ENCODE measurements at regions of chr11 and their contacts with region 1.

Region 1: GRCh38 chr11:116772443-116773202 is at the start of gene BUD13:
- DNase-seq: peak; percentile 96 to 99
- H3K4me3 ChIP-seq: peak within 1 kb of the TSS; percentile 93
- H3K4me3 Mint-ChIP-seq: peak within 1 kb of the TSS; percentile 99
- H3K27ac Mint-ChIP-seq: peak within 1 kb of the TSS; percentile 98
- H3K4me1 ChIP-seq: peaks cover 26% of the 10 kb centered on the region
- H3K4me1 Mint-ChIP-seq: peaks cover 37% of the 10 kb centered on the region
- H3K27me3 ChIP-seq: no peaks in the 10 kb centered on the region
- H3K27me3 Mint-ChIP-seq: no peaks in the 10 kb centered on the region
- CTCF ChIP-seq: peak in 1 of 2 experiments; percentile 54
- total RNA-seq, gene BUD13: 37.8 and 42.6 TPM in 2 replicates

Region 2: GRCh38 chr11:116348226-116348625 is 424.4 kb before region 1 on chr11:
- CTCF ChIA-PET with region 1: no interaction called
- POLR2A ChIA-PET with region 1: no interaction called
- intact Hi-C with region 1: no loop called
- DNase-seq: no peak
- H3K4me3 ChIP-seq: no peak overlapping the region
- H3K4me3 Mint-ChIP-seq: no peak overlapping the region
- H3K27ac Mint-ChIP-seq: no peak overlapping the region
- H3K4me1 ChIP-seq: no peaks in the 10 kb centered on the region
- H3K4me1 Mint-ChIP-seq: no peaks in the 10 kb centered on the region
- H3K27me3 ChIP-seq: no peaks in the 10 kb centered on the region
- H3K27me3 Mint-ChIP-seq: peaks cover 2% of the 10 kb centered on the region
- CTCF ChIP-seq: no peak

Region 3: DNA sequence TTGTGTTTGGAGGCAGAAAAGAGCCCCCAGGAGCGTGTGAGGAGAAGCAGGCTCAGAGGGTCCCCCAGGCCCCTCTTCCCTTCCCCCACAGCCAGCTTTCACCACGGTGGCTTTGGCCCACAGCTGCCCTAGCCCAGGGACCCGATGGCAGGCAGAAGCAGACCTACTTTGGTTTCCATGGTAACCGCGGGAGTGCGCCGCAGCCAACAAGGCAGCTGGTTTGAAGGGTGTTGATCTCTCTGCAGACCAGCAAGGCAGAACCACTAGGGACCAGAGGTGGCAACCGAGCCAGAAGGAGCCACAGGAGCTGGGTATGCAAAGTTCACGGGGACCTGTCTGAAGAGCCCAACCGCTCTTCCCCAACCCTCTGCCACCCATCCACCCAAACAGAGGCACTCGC is 69.2 kb before region 1 on chr11:
- CTCF ChIA-PET with region 1: no interaction called
- POLR2A ChIA-PET with region 1: no interaction called
- intact Hi-C with region 1: no loop called
- DNase-seq: peak; percentile 42 to 49
- H3K4me3 ChIP-seq: no peak overlapping the region
- H3K4me3 Mint-ChIP-seq: no peak overlapping the region
- H3K27ac Mint-ChIP-seq: no peak overlapping the region
- H3K4me1 ChIP-seq: no peaks in the 10 kb centered on the region
- H3K4me1 Mint-ChIP-seq: peaks cover 6% of the 10 kb centered on the region
- H3K27me3 ChIP-seq: peaks cover 2% of the 10 kb centered on the region; the same call in 1 of the 2 replicates
- H3K27me3 Mint-ChIP-seq: no peaks in the 10 kb centered on the region
- CTCF ChIP-seq: no peak

Region 4: GRCh38 chr11:116808386-116809194 is 36.0 kb after region 1 on chr11:
- CTCF ChIA-PET with region 1: no interaction called
- POLR2A ChIA-PET with region 1: interaction called, 5 read pairs
- intact Hi-C with region 1: loop called (anchors 1 kb)
- DNase-seq: peak; percentile 94 to 96
- H3K4me3 ChIP-seq: 0 out of 2 replicates have a peak overlapping the region, but pooled peaks have one; percentile 4
- H3K4me3 Mint-ChIP-seq: peak overlapping the region; percentile 67
- H3K27ac Mint-ChIP-seq: peak overlapping the region; percentile 98
- H3K4me1 ChIP-seq: peaks cover 70% of the 10 kb centered on the region
- H3K4me1 Mint-ChIP-seq: peaks cover 69% of the 10 kb centered on the region
- H3K27me3 ChIP-seq: no peaks in the 10 kb centered on the region
- H3K27me3 Mint-ChIP-seq: no peaks in the 10 kb centered on the region
- CTCF ChIP-seq: no peak

Region 5: DNA sequence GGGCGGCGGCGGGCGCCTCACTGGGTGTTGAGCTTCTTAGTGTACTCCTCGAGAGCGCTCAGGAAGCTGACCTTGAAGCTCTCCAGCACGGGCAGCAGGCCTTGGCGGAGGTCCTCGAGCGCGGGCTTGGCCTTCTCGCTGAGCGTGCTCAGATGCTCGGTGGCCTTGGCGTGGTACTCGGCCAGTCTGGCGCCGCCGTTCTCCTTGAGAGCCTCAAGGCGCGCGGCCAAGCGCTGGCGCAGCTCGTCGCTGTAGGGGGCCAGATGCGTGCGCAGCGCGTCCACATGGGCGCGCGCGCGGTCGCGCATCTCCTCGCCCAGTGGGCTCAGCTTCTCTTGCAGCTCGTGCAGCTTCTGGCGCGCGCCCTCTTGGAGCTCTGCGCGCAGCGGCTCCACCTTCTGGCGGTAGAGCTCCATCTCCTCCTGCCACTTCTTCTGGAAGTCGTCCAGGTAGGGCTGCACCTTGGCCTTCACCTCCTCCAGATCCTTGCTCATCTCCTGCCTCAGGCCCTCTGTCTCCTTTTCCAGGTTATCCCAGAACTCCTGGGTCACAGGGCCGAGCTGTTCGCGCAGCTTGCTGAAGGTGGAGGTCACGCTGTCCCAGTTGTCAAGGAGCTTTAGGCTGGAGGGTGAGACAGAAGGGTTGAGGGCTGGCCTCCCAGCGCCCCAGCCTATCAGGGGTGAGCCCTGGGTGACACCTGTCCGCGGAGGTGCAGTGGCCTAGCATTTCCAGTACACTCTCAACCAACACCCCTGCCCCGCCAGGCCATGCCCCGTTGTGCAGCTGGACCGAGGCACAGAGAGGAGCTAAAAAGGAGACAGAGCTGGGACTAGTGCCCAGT is 63.4 kb after region 1 on chr11:
- CTCF ChIA-PET with region 1: interaction called, 15 read pairs
- POLR2A ChIA-PET with region 1: interaction called, 10 read pairs
- intact Hi-C with region 1: loop called (anchors 1 kb)
- DNase-seq: peak; percentile 69 to 77
- H3K4me3 ChIP-seq: peak overlapping the region; percentile 40
- H3K4me3 Mint-ChIP-seq: peak overlapping the region; percentile 68
- H3K27ac Mint-ChIP-seq: peak overlapping the region; percentile 92
- H3K4me1 ChIP-seq: peaks cover 86% of the 10 kb centered on the region
- H3K4me1 Mint-ChIP-seq: peaks cover 65% of the 10 kb centered on the region
- H3K27me3 ChIP-seq: no peaks in the 10 kb centered on the region
- H3K27me3 Mint-ChIP-seq: no peaks in the 10 kb centered on the region
- CTCF ChIP-seq: peak; percentile 51

Region 6: DNA sequence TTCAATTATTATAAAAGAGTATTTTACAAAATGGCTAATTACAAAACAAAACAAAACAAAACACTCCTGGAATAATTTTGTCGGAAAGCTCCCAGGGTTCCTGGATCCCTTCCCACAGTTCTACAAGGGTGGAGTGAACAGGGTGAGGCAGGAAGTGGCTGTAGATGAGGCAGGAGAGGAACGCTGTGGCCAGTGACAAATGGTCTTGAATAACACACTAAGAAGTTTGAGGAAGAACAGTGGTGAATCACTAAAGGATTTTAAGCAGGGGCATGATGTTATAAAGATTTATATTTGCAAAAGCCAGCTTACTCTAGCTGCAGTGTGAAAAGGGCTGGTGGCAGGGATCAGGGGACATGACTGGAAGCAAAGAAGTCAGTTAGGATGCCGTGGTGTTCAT is 98.6 kb after region 1 on chr11:
- CTCF ChIA-PET with region 1: no interaction called
- POLR2A ChIA-PET with region 1: no interaction called
- intact Hi-C with region 1: loop called (anchors 2 kb)
- DNase-seq: no peak
- H3K4me3 ChIP-seq: no peak overlapping the region
- H3K4me3 Mint-ChIP-seq: no peak overlapping the region
- H3K27ac Mint-ChIP-seq: no peak overlapping the region
- H3K4me1 ChIP-seq: peaks cover 30% of the 10 kb centered on the region
- H3K4me1 Mint-ChIP-seq: peaks cover 24% of the 10 kb centered on the region
- H3K27me3 ChIP-seq: no peaks in the 10 kb centered on the region
- H3K27me3 Mint-ChIP-seq: no peaks in the 10 kb centered on the region
- CTCF ChIP-seq: no peak